Activated T-helper 1 cell treated with anti-CD3 and anti-CD28 coated beads, Interleukin-12 subunit alpha, Interleukin-12 subunit beta, Interleukin-2, Interleukin-4 antibody, amounts not matched to agents 30 ng/mL and 10 ng/mL and 1 ng/mL, durations not matched to agents 14 hours and 24 hours and 36 hours (primary cell): ENCODE measurements at regions of chr3 and their contacts with region 1.

Region 1: GRCh38 chr3:66495646-66496045 is 5.2 kb downstream of the LRIG1 start:
- DNase-seq: no peak
- H3K4me3 Mint-ChIP-seq: peak overlapping the region; percentile 58
- H3K27ac Mint-ChIP-seq: peak overlapping the region; percentile 64
- H3K4me1 Mint-ChIP-seq: peaks cover 95% of the 10 kb centered on the region
- H3K27me3 Mint-ChIP-seq: no peaks in the 10 kb centered on the region

Region 2: DNA sequence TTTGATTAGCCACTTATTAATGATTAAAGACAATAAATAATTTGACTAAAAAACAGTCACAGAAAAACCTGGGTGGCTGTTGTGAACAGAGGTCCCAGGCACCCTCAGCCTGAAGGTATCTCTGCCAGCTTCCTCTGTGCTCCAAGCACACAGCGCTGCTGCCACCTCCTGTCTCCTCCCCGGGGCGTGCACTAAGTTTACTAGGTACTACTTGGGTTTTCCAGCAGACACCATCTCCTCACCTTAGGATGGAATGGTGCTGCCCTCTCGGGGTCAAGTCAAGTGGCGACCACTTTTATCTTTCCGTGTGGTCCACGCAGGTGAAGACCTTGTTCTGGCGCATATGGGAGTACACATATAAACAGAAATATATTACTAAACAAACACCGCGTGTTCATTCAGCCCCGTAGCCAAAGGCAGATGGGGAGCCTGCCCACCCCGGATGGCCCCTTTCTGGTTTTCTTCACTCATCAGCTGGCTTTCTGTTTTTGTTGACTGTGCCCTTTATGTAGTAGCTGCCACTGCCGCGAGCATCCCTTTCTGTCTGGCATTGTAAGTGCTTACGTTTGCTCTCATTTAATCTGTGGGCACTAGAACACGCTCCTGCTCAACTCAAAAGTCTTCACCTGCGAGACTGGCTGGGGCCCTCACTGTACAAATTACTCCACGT is 122.8 kb before region 1 on chr3:
- intact Hi-C with region 1: no loop called
- DNase-seq: no peak
- H3K4me3 Mint-ChIP-seq: no peak overlapping the region
- H3K27ac Mint-ChIP-seq: no peak overlapping the region
- H3K4me1 Mint-ChIP-seq: peaks cover 2% of the 10 kb centered on the region
- H3K27me3 Mint-ChIP-seq: no peaks in the 10 kb centered on the region

Region 3: DNA sequence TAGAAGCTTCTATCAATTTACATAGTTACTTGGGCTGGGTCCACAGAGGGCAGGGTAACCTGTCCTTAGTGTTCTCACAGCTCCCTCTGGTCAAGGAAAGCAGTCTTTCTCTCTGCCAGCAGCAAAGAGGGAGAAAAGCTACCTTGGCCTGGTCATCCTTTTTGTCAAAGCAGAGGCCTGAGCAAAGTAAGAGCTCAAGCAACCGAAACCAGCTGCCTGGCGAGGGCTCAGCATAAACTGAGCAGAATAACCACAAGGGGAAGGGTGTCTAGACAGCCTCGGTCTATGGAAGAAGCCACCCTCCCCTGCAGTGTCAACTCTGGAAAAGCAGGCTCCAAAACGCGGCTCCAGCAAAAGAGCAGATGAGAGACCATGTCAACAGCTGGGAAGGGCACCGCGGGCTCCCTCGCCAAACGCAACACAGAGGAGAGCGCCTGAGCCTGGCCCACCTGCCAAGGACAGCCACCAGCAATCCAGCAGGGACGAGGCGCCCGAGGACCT is 12.2 kb before region 1 on chr3:
- intact Hi-C with region 1: loop called (anchors 1 kb)
- DNase-seq: no peak
- H3K4me3 Mint-ChIP-seq: peak overlapping the region; percentile 42
- H3K27ac Mint-ChIP-seq: peak overlapping the region; percentile 35
- H3K4me1 Mint-ChIP-seq: peaks cover 52% of the 10 kb centered on the region
- H3K27me3 Mint-ChIP-seq: no peaks in the 10 kb centered on the region